ENCODE measurements at regions of chr22 and their contacts with region 1.

Region 1: GRCh38 chr22:50244420-50245213 is at the start of gene TUBGCP6:
- DNase-seq: peak; percentile 89 to 93
- H3K4me3 ChIP-seq: peak within 1 kb of the TSS; percentile 58
- H3K4me3 Mint-ChIP-seq: peak within 1 kb of the TSS; percentile 76
- H3K27ac Mint-ChIP-seq: peak within 1 kb of the TSS; percentile 87
- H3K4me1 ChIP-seq: peaks cover 10% of the 10 kb centered on the region
- H3K4me1 Mint-ChIP-seq: peaks cover 8% of the 10 kb centered on the region
- H3K27me3 ChIP-seq: no peaks in the 10 kb centered on the region
- H3K27me3 Mint-ChIP-seq: no peaks in the 10 kb centered on the region
- CTCF ChIP-seq: no peak
- total RNA-seq, gene TUBGCP6: 29.3 and 34.2 TPM in 2 replicates

Region 2: DNA sequence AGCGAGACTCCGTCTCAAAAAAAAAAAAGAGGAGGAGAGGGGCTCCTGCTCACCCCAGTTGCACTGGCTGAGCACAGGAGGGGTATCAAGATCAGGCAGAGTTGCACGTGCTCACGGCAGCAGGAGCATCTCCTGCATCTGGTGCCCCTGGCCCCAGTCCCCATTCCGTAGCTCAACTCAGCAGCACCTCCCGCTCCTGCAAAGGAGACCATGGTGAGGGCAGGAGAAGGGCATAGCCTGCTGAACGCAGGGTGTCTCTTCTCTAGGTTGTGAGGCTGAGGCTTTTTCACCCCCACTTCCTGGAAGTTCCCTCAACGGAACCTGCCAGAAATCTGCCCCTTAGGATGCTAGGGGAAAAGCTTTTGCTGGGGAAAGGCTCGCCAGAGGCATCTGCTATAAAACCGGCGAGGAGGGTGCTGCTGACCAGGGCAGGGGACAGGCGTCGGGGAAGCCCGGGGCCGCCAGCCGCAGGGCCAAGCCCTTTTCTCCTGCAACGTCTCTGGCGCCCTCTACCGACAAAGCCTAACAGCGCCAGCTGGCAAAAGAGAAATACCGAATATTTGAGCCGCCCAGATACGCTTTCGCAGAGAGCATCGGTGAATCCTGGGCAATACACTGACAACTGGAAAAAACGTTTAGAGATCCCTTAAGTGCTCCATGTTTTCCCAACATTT is 97.5 kb after region 1 on chr22:
- CTCF ChIA-PET with region 1: interaction called, 8 read pairs
- POLR2A ChIA-PET with region 1: no interaction called
- intact Hi-C with region 1: loop called (anchors 1 kb)
- DNase-seq: peak; percentile 89 to 92
- H3K4me3 ChIP-seq: peak overlapping the region; percentile 61
- H3K4me3 Mint-ChIP-seq: peak overlapping the region; percentile 64
- H3K27ac Mint-ChIP-seq: no peak overlapping the region
- H3K4me1 ChIP-seq: no peaks in the 10 kb centered on the region
- H3K4me1 Mint-ChIP-seq: peaks cover 6% of the 10 kb centered on the region
- H3K27me3 ChIP-seq: no peaks in the 10 kb centered on the region
- H3K27me3 Mint-ChIP-seq: no peaks in the 10 kb centered on the region
- CTCF ChIP-seq: peak; percentile 90 to 94